IMR-90 (cell line): ENCODE measurements at regions of chr2 and their contacts with region 1.

Region 1: DNA sequence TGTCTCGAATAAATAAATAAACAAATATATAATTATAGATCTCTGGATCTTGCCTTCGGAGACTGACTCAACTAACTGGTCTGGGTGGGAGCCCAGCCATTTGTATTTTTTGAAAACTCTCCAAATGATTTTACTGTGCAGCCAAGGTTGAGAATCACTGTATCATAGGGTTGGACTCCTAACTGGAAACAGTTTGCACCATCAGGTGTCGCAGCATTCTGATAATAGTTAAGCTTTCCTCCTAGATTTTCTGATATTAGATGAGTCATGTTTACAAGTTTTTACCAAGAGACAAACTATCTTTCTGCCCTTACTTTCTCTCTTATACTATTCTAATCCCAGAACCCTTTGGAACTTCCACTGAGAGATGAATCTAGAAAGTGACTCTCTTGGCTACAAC is 16.8 kb downstream of the IL37 start:
- DNase-seq: no peak
- ATAC-seq: no peak
- H3K4me3 ChIP-seq: no peak overlapping the region
- H3K27ac ChIP-seq: no peak overlapping the region
- H3K4me1 ChIP-seq: no peaks in the 10 kb centered on the region
- H3K27me3 ChIP-seq: peaks cover 12% of the 10 kb centered on the region
- CTCF ChIP-seq: no peak
- POLR2A ChIP-seq: no peak
- RAD21 ChIP-seq: no peak

Region 2: GRCh38 chr2:112891385-112891831 is 36.3 kb before region 1 on chr2:
- CTCF ChIA-PET with region 1: no interaction called
- POLR2A ChIA-PET with region 1: interaction called, 3 read pairs
- dilution Hi-C with region 1: no loop called
- in situ Hi-C with region 1: no loop called
- intact Hi-C with region 1: loop called (anchors 2 kb)
- DNase-seq: no peak
- ATAC-seq: no peak
- H3K4me3 ChIP-seq: no peak overlapping the region
- H3K27ac ChIP-seq: no peak overlapping the region
- H3K4me1 ChIP-seq: peaks cover 2% of the 10 kb centered on the region; the same call in 1 of the 2 replicates
- H3K27me3 ChIP-seq: no peaks in the 10 kb centered on the region; the same call in 1 of the 2 replicates
- CTCF ChIP-seq: no peak
- POLR2A ChIP-seq: no peak
- RAD21 ChIP-seq: no peak

Region 3: DNA sequence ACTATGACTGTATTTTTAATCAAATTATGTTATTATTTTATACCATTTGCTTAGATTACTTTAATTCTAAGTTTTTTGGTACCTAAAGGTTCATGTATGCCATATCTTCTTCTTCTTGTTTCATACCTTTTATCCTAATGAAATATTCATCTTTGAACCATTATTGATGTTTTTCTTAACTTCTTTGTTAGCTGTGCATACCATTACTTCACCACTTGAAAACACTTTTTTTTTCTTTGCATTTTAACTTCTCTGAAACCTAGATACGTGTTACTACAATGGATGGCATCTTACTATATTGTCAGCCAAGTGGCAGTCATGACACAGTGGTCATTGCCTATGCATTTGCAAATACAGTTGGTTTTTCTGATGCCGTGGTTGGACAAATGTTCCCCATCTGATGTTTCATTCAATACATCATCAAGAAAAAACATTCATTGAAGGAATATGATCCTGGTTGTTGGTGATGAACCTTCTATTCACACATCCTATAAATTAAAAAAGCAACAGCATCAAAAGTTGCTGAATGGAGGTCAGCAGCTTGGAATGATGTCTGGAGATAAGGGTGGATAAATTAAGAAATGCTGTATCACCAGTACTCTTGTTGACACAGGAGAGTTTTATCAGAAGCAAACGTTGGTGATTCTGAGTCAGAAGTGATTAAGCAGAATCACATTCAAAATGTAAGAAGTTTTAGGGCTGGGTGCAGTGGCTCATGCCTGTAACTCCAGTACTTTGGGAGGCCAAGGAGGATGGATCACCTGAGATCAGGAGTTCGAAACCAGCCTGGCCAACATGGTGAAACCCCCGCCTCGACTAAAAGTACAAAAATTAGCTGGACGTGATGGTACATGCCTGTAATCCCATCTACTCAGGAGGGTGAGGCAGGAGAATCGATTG is 84.9 kb after region 1 on chr2:
- CTCF ChIA-PET with region 1: no interaction called
- POLR2A ChIA-PET with region 1: no interaction called
- dilution Hi-C with region 1: no loop called
- in situ Hi-C with region 1: no loop called
- intact Hi-C with region 1: no loop called
- DNase-seq: peak; percentile 36
- ATAC-seq: no peak
- H3K4me3 ChIP-seq: no peak overlapping the region
- H3K27ac ChIP-seq: no peak overlapping the region
- H3K4me1 ChIP-seq: no peaks in the 10 kb centered on the region
- H3K27me3 ChIP-seq: peaks cover 2% of the 10 kb centered on the region; the same call in 1 of the 2 replicates
- CTCF ChIP-seq: no peak
- POLR2A ChIP-seq: no peak
- RAD21 ChIP-seq: no peak